ENCODE measurements at regions of chr3 and their contacts with region 1.

Region 1: DNA sequence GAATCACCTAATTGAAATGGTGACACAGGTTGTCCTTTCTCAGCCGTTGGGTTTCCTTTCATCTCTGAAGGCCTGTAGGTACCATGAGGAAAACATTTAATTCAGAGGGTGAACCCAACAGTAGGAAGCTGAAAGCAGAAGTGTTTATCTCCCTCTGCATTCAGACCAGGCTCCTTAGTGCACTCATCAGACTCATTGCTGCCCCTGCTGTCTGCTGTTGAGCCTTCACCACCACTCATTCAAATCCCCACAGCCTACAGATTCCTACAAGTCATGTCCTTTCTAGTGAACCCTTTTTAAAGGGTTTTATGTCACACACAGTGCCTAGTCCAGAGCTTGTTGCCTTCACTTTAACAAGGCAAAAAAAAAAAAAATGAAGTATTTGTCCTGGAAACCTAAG is 13.4 kb downstream of the WDR48 start:
- DNase-seq: peak; percentile 16
- H3K4me3 ChIP-seq: no peak overlapping the region
- H3K27ac ChIP-seq: no peak overlapping the region
- H3K4me1 ChIP-seq: peaks cover 7% of the 10 kb centered on the region
- H3K27me3 ChIP-seq: no peaks in the 10 kb centered on the region
- CTCF ChIP-seq: peak; percentile 47 to 49

Region 2: GRCh38 chr3:39118079-39118478 is 52.9 kb after region 1 on chr3:
- CTCF ChIA-PET with region 1: no interaction called
- dilution Hi-C with region 1: loop called (anchors 5 kb)
- in situ Hi-C with region 1: no loop called
- intact Hi-C with region 1: no loop called
- DNase-seq: no peak
- H3K4me3 ChIP-seq: no peak overlapping the region
- H3K27ac ChIP-seq: no peak overlapping the region
- H3K4me1 ChIP-seq: no peaks in the 10 kb centered on the region
- H3K27me3 ChIP-seq: no peaks in the 10 kb centered on the region
- CTCF ChIP-seq: no peak

Region 3: DNA sequence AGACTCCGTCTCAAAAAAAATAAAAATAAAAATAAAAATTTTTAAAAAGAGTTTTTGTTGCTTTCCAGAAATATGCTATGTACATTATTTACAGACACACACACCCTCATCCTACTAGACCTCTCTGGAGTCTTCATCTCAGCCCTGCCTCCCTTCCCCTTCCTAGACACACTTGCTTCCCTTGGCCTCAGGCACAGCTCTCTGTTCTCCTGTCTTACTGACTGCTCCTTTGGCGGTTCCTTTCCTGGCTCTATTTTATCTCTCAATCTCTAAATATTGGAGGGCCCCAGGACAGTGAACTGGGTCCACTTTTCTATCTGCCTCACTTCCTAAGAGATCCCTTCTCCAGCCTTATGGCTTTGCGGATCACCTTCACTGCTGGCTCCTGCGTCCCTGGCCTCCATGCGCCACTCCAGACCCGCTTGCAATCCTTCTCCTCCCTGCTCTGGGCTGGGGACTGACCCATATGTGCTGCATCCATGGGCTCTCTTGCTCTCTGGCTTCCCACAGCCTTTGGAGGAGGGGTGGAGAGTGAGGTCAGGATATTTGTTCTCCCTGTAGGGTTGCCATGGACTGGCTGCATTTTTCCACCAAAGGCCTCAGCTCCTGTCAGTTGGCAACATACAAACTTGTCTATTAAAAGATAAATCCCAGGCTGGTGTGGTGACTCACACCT is 109.7 kb after region 1 on chr3:
- CTCF ChIA-PET with region 1: no interaction called
- dilution Hi-C with region 1: loop called (anchors 5 kb)
- in situ Hi-C with region 1: no loop called
- intact Hi-C with region 1: no loop called
- DNase-seq: no peak
- H3K4me3 ChIP-seq: no peak overlapping the region
- H3K27ac ChIP-seq: no peak overlapping the region
- H3K4me1 ChIP-seq: peaks cover 23% of the 10 kb centered on the region
- H3K27me3 ChIP-seq: no peaks in the 10 kb centered on the region
- CTCF ChIP-seq: no peak